Activated T-helper 1 cell treated with anti-CD3 and anti-CD28 coated beads, Interleukin-12 subunit alpha, Interleukin-12 subunit beta, Interleukin-2, Interleukin-4 antibody, amounts not matched to agents 30 ng/mL and 10 ng/mL and 1 ng/mL, durations not matched to agents 14 hours and 24 hours and 36 hours (primary cell): ENCODE measurements at regions of chr11 and their contacts with region 1.

Region 1: DNA sequence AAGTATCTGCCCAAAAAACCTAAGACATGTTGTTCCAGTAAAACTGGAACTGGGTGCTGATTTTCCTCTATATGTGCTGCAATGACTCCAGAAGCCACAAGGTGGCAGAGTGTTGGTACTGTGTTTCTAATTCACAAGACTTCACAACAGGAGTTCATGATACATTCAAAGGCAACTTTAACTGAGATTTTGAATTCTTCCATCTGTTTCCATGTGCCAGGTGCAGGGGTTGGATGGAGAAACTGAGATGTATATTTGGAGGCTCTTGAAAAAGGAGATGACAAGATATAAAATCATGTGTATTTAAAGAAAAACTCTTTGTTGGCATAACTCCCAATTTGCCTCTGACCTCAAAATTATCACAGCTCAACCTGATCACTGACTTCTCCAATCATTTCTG is 1098.6 kb upstream of the CCDC90B start:
- DNase-seq: no peak
- H3K4me3 Mint-ChIP-seq: no peak overlapping the region
- H3K27ac Mint-ChIP-seq: no peak overlapping the region
- H3K4me1 Mint-ChIP-seq: no peaks in the 10 kb centered on the region
- H3K27me3 Mint-ChIP-seq: no peaks in the 10 kb centered on the region

Region 2: GRCh38 chr11:84398017-84398626 is 13.4 kb after region 1 on chr11:
- intact Hi-C with region 1: loop called (anchors 1 kb)
- DNase-seq: no peak
- H3K4me3 Mint-ChIP-seq: no peak overlapping the region
- H3K27ac Mint-ChIP-seq: no peak overlapping the region
- H3K4me1 Mint-ChIP-seq: no peaks in the 10 kb centered on the region
- H3K27me3 Mint-ChIP-seq: no peaks in the 10 kb centered on the region

Region 3: GRCh38 chr11:84564180-84564866 is 179.6 kb after region 1 on chr11:
- intact Hi-C with region 1: loop called (anchors 2 kb)
- DNase-seq: no peak
- H3K4me3 Mint-ChIP-seq: no peak overlapping the region
- H3K27ac Mint-ChIP-seq: no peak overlapping the region
- H3K4me1 Mint-ChIP-seq: no peaks in the 10 kb centered on the region
- H3K27me3 Mint-ChIP-seq: no peaks in the 10 kb centered on the region